Esophagus squamous epithelium (tissue), 5 donors: ENCODE measurements at regions of chr3 and their contacts with region 1.

Region 1: GRCh38 chr3:41464858-41465257 is 265.6 kb downstream of the CTNNB1 start:
- DNase-seq: no peak
- H3K4me3 ChIP-seq: no peak overlapping the region
- H3K27ac ChIP-seq: no peak overlapping the region
- H3K4me1 ChIP-seq: no peaks in the 10 kb centered on the region
- H3K27me3 ChIP-seq: no peaks in the 10 kb centered on the region
- CTCF ChIP-seq: no peak
- POLR2A ChIP-seq: no peak

Region 2: DNA sequence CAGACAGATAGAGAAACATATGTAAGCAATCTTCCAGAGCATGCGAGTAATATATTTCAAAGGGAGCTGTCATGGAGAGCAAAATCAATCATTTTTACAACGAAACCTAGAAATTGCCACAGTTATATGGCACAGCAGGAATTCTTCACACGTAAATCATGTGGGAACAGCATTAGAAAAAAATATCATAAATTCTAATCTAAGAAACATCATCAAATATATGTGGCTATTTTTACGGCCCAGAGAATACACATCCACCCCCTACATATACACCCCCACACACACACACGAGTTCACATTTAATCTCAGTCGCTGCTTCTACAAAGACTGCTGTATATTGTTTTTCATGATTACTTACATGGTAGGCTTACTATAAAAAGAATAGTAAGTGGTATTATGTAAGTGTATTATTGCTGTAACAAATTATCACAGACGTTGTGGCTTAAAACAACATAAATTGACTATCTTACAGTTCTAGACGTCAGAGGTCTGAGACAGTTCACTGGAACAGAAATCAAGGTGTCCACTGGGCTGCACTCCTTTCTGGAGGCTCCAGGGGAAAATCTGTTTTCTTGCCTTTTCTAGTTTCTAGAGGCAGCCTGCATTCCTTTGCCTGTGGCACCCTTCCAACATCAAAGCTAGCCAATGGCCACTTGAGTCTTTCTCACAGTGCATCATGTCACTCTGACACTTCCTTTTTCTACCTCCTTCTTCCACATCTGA is 133.7 kb after region 1 on chr3:
- intact Hi-C with region 1: no loop called
- DNase-seq: no peak
- H3K4me3 ChIP-seq: no peak overlapping the region
- H3K27ac ChIP-seq: no peak overlapping the region
- H3K4me1 ChIP-seq: no peaks in the 10 kb centered on the region
- H3K27me3 ChIP-seq: no peaks in the 10 kb centered on the region
- CTCF ChIP-seq: no peak
- POLR2A ChIP-seq: no peak

Region 3: GRCh38 chr3:41649133-41649739 is 184.4 kb after region 1 on chr3:
- intact Hi-C with region 1: loop called (anchors 5 kb)
- DNase-seq: no peak
- H3K4me3 ChIP-seq: no peak overlapping the region
- H3K27ac ChIP-seq: no peak overlapping the region
- H3K4me1 ChIP-seq: no peaks in the 10 kb centered on the region
- H3K27me3 ChIP-seq: no peaks in the 10 kb centered on the region
- CTCF ChIP-seq: no peak
- POLR2A ChIP-seq: no peak